Mucosa of descending colon (tissue), 3 donors: ENCODE measurements at regions of chr1 and their contacts with region 1.

Region 1: DNA sequence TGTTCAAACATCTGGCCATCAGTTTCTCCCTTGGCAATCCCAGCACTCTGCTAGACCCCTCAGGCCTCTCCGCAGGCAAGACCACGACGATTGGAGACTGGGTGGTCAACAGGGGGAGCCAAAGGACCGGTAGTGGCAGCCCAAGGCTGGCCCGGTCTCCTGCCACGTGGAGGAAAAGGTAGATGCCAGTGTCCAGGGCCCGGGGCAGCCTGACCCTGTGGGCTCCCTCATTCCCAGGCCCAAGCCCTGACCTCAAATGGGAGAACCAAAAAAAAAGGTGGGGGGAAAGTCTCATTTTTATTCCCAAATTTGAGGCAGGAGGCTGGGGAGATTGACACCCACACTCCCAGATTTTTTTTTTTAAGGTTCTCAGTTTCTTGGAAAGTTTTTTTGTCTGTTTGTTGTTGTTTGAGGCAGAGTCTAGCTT is 24.8 kb downstream of the S100A6 start:
- DNase-seq: peak; percentile 84 to 89 (median 87)
- ATAC-seq: peak; percentile 71
- H3K4me3 ChIP-seq: no peak overlapping the region
- H3K4me1 ChIP-seq: peaks cover 17% of the 10 kb centered on the region
- CTCF ChIP-seq: peak; percentile 85

Region 2: DNA sequence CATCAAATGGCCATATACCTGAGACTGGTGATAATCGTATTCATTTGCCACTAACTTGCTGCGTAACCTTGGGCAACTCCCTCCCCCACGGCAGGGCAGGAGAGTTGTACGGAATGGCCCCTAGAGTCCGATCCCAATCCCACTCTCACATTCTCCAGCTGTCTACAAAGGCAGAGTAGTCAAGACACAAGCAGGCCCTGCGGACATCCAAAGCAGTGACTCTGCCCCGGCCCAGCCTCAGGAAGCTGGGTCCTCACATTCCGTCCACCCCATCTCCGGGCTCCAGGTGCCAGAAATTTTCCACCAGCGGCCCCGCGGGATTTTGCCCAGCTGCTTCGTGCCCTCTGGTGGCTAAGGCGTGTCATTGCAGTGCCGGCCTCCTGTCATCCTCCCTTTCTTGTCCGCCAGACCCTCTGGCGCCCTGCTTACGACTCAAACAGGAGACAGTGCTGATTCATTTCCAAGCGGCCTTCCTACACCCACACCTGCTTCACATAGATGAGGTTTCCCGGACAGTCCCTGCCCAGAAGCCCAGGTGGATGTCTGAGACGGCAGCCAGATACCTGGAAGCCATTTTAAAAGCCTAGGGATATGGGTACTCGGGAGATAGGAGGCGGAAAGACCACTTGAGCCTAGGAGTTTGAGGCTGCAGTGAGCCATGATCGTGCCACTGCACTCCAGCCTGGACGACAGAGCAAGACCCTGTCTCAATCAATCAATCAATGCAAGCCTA is 57.5 kb after region 1 on chr1:
- intact Hi-C with region 1: loop called (anchors 2 to 5 kb)
- DNase-seq: peak; percentile 90 to 95 (median 93)
- ATAC-seq: peak; percentile 58
- H3K4me3 ChIP-seq: no peak overlapping the region
- H3K4me1 ChIP-seq: peaks cover 36% of the 10 kb centered on the region
- CTCF ChIP-seq: peak; percentile 99

Region 3: DNA sequence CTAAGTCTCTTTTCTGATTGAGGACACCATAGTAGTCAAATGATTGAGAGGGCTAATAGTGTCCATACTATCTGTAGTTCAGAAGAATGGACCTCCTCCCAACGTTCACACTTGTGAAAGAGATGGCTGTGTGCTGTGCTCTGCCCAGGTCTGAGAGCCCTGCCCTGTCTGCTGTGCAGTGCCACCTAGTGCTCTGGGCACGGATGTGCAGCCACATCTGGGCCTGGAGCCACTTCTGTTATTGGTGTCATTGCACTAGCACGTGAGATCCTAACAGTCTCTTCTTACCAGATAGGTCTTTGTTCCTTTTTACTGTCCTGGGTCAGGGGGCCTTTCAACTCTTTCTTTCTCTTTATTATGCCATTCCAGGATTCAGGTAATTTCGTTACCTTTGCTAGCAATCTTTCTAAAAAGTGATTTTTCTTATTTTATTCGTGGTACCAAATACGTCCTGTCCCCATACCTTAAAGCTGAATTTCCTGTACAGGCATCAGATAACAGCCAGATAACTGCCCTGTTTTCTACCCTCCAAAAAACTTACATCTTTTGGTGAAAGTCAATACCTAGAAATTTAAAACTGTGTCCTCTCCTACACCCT is 238.5 kb after region 1 on chr1:
- intact Hi-C with region 1: loop called in 1 of 2 experiments (anchors 10 kb)
- DNase-seq: peak; percentile 83 to 93 (median 91)
- ATAC-seq: peak; percentile 96
- H3K4me3 ChIP-seq: no peak overlapping the region
- H3K4me1 ChIP-seq: peaks cover 13% of the 10 kb centered on the region
- CTCF ChIP-seq: peak; percentile 97